ENCODE measurements at regions of chr3 and their contacts with region 1.

Region 1: GRCh38 chr3:71045917-71046282 is 537.6 kb downstream of the FOXP1 start:
- DNase-seq: no peak
- ATAC-seq: no peak

Region 2: GRCh38 chr3:71111784-71112440 is 66.0 kb after region 1 on chr3:
- intact Hi-C with region 1: loop called (anchors 2 kb)
- DNase-seq: no peak
- ATAC-seq: no peak

Measured in Right ventricle myocardium inferior (tissue), 1 donor.